ENCODE measurements at regions of chr6 and their contacts with region 1.

Region 1: DNA sequence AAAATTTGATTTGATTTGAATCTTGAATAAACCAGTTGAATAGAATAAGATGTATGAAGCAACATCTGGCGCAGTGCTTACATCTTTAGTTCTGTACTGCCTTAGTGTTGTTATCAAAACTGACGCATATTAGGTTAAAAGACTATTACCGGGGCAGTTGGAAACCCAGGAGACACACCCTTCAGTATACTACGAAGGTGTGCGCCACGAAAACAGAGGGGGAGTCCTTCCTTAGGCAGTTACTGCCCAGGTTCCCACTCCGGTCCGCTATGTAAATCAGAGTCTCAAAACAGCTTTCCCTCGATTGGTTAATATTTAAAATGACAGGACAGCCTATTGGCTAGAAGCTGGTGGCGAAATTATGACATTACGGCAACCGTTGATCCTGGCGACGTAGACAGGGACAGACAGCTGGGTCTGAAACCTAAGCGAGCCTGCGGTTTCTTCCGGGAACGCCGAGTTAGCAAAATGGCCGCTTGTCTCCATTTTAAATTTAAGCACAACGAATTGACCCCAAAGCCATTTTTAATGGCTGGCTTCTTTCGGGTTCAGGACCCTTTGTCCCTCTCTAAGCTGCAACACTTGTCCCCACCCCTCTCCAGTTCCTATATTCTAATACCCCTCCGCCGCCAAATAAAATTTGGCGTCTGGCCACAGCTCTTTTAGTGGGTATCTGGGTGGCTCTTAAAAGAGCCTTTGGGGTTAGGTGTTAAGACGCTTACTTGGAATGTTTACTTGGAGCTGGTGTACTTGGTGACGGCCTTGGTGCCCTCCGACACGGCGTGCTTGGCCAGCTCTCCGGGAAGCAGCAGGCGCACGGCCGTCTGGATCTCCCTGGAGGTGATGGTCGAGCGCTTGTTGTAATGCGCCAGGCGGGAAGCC is 35.8 kb downstream of the HFE start:
- DNase-seq: peak; percentile 89
- ATAC-seq: peak; percentile 51
- H3K4me3 Mint-ChIP-seq: peak overlapping the region; percentile 95
- H3K27ac Mint-ChIP-seq: peak overlapping the region; percentile 99
- H3K4me1 Mint-ChIP-seq: peaks cover 40% of the 10 kb centered on the region
- H3K27me3 Mint-ChIP-seq: no peaks in the 10 kb centered on the region
- CTCF ChIP-seq: no peak

Region 2: DNA sequence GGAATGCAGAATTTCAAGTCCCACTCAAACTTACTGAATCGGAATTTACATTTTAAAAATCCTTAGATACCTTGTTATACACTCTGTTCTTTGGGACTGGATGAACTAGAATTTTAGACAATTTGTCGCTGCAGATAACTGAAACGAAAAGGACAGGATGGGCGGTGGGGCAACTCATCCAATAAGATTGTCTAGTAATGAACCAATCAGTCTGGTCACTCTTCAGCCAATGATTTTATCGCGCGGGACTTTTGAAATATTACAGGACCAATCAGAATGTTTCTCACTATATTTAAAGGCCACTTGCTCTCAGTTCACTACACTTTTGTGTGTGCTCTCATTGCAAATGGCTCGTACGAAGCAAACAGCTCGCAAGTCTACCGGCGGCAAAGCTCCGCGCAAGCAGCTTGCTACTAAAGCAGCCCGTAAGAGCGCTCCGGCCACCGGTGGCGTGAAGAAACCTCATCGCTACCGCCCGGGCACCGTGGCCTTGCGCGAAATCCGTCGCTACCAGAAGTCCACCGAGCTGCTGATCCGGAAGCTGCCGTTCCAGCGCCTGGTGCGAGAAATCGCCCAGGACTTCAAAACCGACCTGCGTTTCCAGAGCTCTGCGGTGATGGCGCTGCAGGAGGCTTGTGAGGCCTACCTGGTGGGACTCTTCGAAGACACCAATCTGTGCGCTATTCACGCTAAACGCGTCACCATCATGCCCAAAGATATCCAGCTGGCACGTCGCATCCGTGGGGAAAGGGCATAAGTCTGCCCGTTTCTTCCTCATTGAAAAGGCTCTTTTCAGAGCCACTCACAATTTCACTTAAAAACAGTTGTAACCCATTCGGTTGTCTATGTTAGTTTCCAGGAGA is 77.7 kb before region 1 on chr6:
- CTCF ChIA-PET with region 1: no interaction called
- POLR2A ChIA-PET with region 1: interaction called, 41 read pairs
- DNase-seq: peak; percentile 43
- ATAC-seq: peak; percentile 22; the same call in 1 of the 2 replicates
- H3K4me3 Mint-ChIP-seq: peak overlapping the region; percentile 64
- H3K27ac Mint-ChIP-seq: peak overlapping the region; percentile 95
- H3K4me1 Mint-ChIP-seq: peaks cover 42% of the 10 kb centered on the region
- H3K27me3 Mint-ChIP-seq: no peaks in the 10 kb centered on the region
- CTCF ChIP-seq: no peak

Region 3: GRCh38 chr6:26156076-26156849 is 33.2 kb after region 1 on chr6:
- CTCF ChIA-PET with region 1: interaction called, 3 read pairs
- POLR2A ChIA-PET with region 1: interaction called, 563 read pairs
- DNase-seq: peak; percentile 81
- ATAC-seq: peak; percentile 47
- H3K4me3 Mint-ChIP-seq: peak overlapping the region; percentile 84
- H3K27ac Mint-ChIP-seq: peak overlapping the region; percentile 98
- H3K4me1 Mint-ChIP-seq: peaks cover 22% of the 10 kb centered on the region
- H3K27me3 Mint-ChIP-seq: peaks cover 3% of the 10 kb centered on the region; the same call in 1 of the 2 replicates
- CTCF ChIP-seq: no peak

Region 4: DNA sequence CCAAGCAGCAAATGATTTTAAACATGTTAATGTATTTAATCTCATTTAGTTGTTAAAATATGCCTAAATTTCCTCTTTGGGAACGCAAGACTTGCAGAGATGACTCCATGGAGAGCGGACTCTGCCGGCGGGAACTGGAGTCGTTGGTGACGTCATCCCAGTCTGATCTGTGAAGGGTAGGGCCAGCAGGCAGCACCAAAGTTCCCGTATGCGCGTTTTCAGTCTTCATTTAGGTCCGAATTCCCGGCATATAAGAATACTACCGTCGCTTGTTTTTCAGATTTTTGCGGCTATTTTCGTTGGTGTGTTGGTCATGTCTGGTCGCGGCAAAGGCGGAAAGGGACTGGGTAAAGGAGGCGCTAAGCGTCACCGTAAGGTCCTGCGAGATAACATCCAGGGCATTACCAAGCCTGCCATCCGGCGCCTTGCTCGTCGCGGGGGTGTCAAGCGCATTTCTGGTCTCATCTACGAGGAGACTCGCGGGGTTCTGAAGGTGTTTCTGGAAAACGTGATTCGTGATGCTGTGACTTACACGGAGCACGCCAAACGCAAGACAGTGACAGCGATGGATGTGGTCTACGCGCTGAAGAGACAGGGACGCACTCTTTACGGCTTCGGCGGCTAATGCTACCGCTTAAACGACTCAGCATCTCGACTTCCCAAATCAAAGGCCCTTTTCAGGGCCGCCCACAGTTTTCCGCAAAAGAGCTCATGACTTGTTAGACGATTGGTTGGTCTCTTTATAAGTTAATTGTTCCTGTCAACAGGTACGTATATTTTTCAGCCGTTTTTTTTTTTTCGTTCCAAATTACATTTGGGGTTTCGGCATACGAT is 81.5 kb after region 1 on chr6:
- CTCF ChIA-PET with region 1: no interaction called
- POLR2A ChIA-PET with region 1: interaction called, 212 read pairs
- DNase-seq: peak; percentile 90
- ATAC-seq: peak; percentile 58
- H3K4me3 Mint-ChIP-seq: no peak overlapping the region
- H3K27ac Mint-ChIP-seq: no peak overlapping the region
- H3K4me1 Mint-ChIP-seq: peaks cover 22% of the 10 kb centered on the region
- H3K27me3 Mint-ChIP-seq: no peaks in the 10 kb centered on the region
- CTCF ChIP-seq: no peak

Region 5: GRCh38 chr6:26270903-26271667 is 148.1 kb after region 1 on chr6:
- CTCF ChIA-PET with region 1: no interaction called
- POLR2A ChIA-PET with region 1: interaction called, 65 read pairs
- DNase-seq: peak; percentile 65
- ATAC-seq: peak; percentile 28
- H3K4me3 Mint-ChIP-seq: no peak overlapping the region
- H3K27ac Mint-ChIP-seq: no peak overlapping the region
- H3K4me1 Mint-ChIP-seq: peaks cover 35% of the 10 kb centered on the region
- H3K27me3 Mint-ChIP-seq: no peaks in the 10 kb centered on the region
- CTCF ChIP-seq: no peak

Region 6: GRCh38 chr6:27809939-27810767 is 1687.1 kb after region 1 on chr6:
- CTCF ChIA-PET with region 1: no interaction called
- POLR2A ChIA-PET with region 1: interaction called, 18 read pairs
- DNase-seq: peak; percentile 58
- ATAC-seq: peak; percentile 7
- H3K4me3 Mint-ChIP-seq: peak overlapping the region; percentile 98
- H3K27ac Mint-ChIP-seq: peak overlapping the region; percentile 98
- H3K4me1 Mint-ChIP-seq: peaks cover 45% of the 10 kb centered on the region
- H3K27me3 Mint-ChIP-seq: peaks cover 3% of the 10 kb centered on the region
- CTCF ChIP-seq: no peak

Measured in WTC11 (cell line).